ENCODE measurements at regions of chr3 and their contacts with region 1.

Region 1: GRCh38 chr3:37967260-37967881 is 23.2 kb upstream of the VILL start:
- DNase-seq: peak; percentile 82
- H3K4me3 ChIP-seq: no peak overlapping the region
- H3K27ac ChIP-seq: no peak overlapping the region
- H3K4me1 ChIP-seq: peaks cover 6 to 40% (median 25%) of the 10 kb centered on the region in 4 donors
- H3K27me3 ChIP-seq: no peaks in the 10 kb centered on the region
- CTCF ChIP-seq: peak; percentile 79 to 91 (median 84)
- EP300 ChIP-seq: no peak
- POLR2A ChIP-seq: no peak

Region 2: DNA sequence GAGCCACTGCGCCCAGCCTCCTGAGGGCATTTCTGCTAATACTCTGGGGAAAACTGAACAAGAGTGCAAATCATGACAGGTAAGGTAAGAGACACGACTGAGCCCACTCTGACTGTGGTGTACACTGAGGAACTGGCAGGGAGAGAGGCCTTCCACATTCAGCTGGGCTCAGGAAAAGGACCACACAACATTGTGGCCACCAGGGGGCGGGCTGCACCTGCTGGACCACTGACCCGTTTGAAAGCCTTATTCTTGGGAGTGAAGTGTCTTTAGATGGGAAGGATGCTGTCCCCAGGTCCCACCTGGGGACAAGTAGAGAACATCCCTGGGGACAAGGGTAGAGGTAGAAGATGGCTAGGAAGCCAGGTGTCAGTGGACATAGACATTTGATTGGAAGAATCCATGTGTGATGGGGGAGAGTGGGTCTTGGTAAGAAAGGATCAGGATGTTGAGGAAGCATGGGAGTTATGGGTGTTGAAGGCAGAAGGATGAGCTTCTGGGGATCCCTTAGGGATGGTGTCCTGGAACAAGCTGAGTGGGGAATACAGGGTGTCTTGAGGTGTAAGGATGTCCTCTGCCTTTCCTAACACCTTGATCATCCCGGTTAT is 111.9 kb before region 1 on chr3:
- in situ Hi-C with region 1: loop called (anchors 5 to 10 kb)
- intact Hi-C with region 1: loop called (anchors 1 kb)
- DNase-seq: peak; percentile 88
- H3K4me3 ChIP-seq: no peak overlapping the region
- H3K27ac ChIP-seq: no peak overlapping the region
- H3K4me1 ChIP-seq: peaks cover 4 to 23% (median 9%) of the 10 kb centered on the region in 4 donors
- H3K27me3 ChIP-seq: no peaks in the 10 kb centered on the region
- CTCF ChIP-seq: peak; percentile 90 to 96 (median 94)
- EP300 ChIP-seq: no peak
- POLR2A ChIP-seq: no peak